CD14-positive monocyte (primary cell): ENCODE measurements at regions of chrX and their contacts with region 1.

Region 1: GRCh38 chrX:48945516-48946348 is 11.7 kb downstream of the OTUD5 start:
- DNase-seq: peak; percentile 31 to 46 (median 42)
- H3K4me3 ChIP-seq: no peak overlapping the region
- H3K4me3 Mint-ChIP-seq: no peak overlapping the region
- H3K27ac ChIP-seq: no peak overlapping the region
- H3K27ac Mint-ChIP-seq: peak overlapping the region in 6 of 7 donors; percentile 30 to 81 (median 50)
- H3K4me1 ChIP-seq: no peaks in the 10 kb centered on the region
- H3K4me1 Mint-ChIP-seq: peaks cover 8% of the 10 kb centered on the region
- H3K27me3 ChIP-seq: no peaks in the 10 kb centered on the region
- H3K27me3 Mint-ChIP-seq: peaks cover 0 to 3% (median 0%) of the 10 kb centered on the region in 3 donors
- CTCF ChIP-seq: peak; percentile 73

Region 2: GRCh38 chrX:48891402-48892288 is 54.1 kb before region 1 on chrX:
- intact Hi-C with region 1: loop called (anchors 5 to 10 kb)
- DNase-seq: peak; percentile 74 to 80 (median 79)
- H3K4me3 ChIP-seq: peak overlapping the region; percentile 36 to 77 (median 49)
- H3K4me3 Mint-ChIP-seq: peak overlapping the region; percentile 83 to 84
- H3K27ac ChIP-seq: peak overlapping the region in 1 of 2 donors; percentile 28
- H3K27ac Mint-ChIP-seq: peak overlapping the region in 6 of 7 donors; percentile 46 to 86 (median 80)
- H3K4me1 ChIP-seq: peaks cover 15 to 27% of the 10 kb centered on the region in 2 donors
- H3K4me1 Mint-ChIP-seq: peaks cover 21% of the 10 kb centered on the region
- H3K27me3 ChIP-seq: no peaks in the 10 kb centered on the region
- H3K27me3 Mint-ChIP-seq: peaks cover 0 to 13% (median 10%) of the 10 kb centered on the region in 3 donors
- CTCF ChIP-seq: peak; percentile 66

Region 3: DNA sequence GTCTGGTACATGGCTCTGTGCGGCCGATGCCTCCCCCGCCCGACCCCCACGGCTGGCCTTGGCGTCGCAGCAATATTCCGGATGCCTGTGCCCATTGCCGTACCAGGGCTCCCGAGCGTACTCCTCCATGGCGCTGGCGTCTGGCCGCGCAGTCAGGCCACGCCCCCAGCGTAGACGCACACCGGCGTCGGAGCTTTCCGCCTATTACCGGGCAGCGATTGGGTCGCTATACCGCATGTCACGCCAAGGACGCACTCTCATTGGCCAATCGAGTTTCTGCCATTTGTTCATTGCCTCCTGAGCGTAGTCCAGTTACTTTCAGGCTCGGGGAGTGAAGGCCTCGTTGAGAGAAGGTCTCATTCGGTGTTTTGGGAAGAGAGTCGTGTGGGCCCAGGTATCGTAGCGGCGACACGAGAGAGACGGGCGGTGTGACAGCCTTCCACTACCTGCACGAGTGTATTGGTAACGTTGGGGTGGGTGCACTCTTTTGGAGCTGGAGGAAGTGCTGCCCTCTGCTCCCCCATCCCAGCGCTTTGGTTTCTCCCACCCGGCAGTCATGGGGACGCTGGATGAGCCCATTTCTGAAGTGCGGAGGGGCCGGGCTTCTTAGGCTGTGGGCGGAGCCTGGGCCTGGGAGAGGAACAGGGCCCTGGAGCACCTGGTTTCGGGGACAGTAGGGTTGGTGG is 48.0 kb before region 1 on chrX and contains the starts of genes PQBP1 and TIMM17B:
- intact Hi-C with region 1: loop called (anchors 5 to 10 kb)
- DNase-seq: peak; percentile 93 to 94 (median 93)
- H3K4me3 ChIP-seq: peak within 1 kb of the TSS; percentile 81 to 98 (median 88)
- H3K4me3 Mint-ChIP-seq: peak within 1 kb of the TSS; percentile 87 to 96
- H3K27ac ChIP-seq: peak within 1 kb of the TSS; percentile 98 to 100
- H3K27ac Mint-ChIP-seq: peak within 1 kb of the TSS; percentile 94 to 100 (median 98)
- H3K4me1 ChIP-seq: peaks cover 19 to 23% of the 10 kb centered on the region in 2 donors
- H3K4me1 Mint-ChIP-seq: peaks cover 15% of the 10 kb centered on the region
- H3K27me3 ChIP-seq: no peaks in the 10 kb centered on the region
- H3K27me3 Mint-ChIP-seq: peaks cover 0 to 6% (median 0%) of the 10 kb centered on the region in 3 donors
- CTCF ChIP-seq: no peak
- polyA plus RNA-seq, gene PQBP1: 71.7 to 129 (median 78.3) TPM
- polyA plus RNA-seq, gene TIMM17B: 52.2 to 86.9 (median 86.8) TPM

Region 4: DNA sequence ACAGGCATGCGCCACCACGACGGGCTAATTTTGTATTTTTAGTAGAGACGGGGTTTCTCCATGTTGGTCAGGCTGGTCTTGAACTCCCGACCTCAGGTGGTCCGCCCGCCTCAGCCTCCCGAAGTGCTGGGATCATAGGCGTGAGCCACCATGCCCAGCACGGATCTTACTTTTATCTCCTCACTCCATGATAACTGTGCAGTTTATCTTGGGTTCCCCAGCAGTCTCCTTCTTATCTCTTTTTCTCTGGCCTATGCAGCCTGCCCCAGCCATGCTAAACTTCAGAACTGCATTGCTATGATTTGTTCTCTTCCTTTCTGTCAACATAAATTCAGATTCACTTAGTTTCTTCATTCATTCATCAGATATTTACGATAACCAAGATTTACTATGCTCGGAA is 727.7 kb after region 1 on chrX:
- intact Hi-C with region 1: no loop called
- DNase-seq: no peak
- H3K4me3 ChIP-seq: no peak overlapping the region
- H3K4me3 Mint-ChIP-seq: no peak overlapping the region
- H3K27ac ChIP-seq: no peak overlapping the region
- H3K27ac Mint-ChIP-seq: no peak overlapping the region
- H3K4me1 ChIP-seq: no peaks in the 10 kb centered on the region
- H3K4me1 Mint-ChIP-seq: no peaks in the 10 kb centered on the region
- H3K27me3 ChIP-seq: peaks cover 0 to 3% of the 10 kb centered on the region in 2 donors
- H3K27me3 Mint-ChIP-seq: peaks cover 3 to 9% (median 5%) of the 10 kb centered on the region in 3 donors
- CTCF ChIP-seq: no peak